ENCODE measurements at regions of chr6 and their contacts with region 1.

Region 1: GRCh38 chr6:30533460-30534294 is 22.6 kb downstream of the GNL1 start:
- DNase-seq: no peak
- H3K4me3 ChIP-seq: no peak overlapping the region
- H3K27ac ChIP-seq: no peak overlapping the region
- H3K4me1 ChIP-seq: no peaks in the 10 kb centered on the region
- H3K27me3 ChIP-seq: no peaks in the 10 kb centered on the region
- CTCF ChIP-seq: no peak
- EP300 ChIP-seq: no peak
- POLR2A ChIP-seq: no peak
- RAD21 ChIP-seq: no peak

Region 2: GRCh38 chr6:30418448-30418847 is 115.2 kb before region 1 on chr6:
- CTCF ChIA-PET with region 1: no interaction called
- POLR2A ChIA-PET with region 1: no interaction called
- DNase-seq: no peak
- H3K4me3 ChIP-seq: no peak overlapping the region
- H3K27ac ChIP-seq: no peak overlapping the region
- H3K4me1 ChIP-seq: no peaks in the 10 kb centered on the region
- H3K27me3 ChIP-seq: peaks cover 0 to 5% (median 0%) of the 10 kb centered on the region in 4 experiments; a peak in 2 of 7 replicates
- CTCF ChIP-seq: no peak
- EP300 ChIP-seq: no peak
- POLR2A ChIP-seq: no peak
- RAD21 ChIP-seq: no peak

Region 3: GRCh38 chr6:30483677-30484279 is 49.9 kb before region 1 on chr6:
- CTCF ChIA-PET with region 1: interaction called, 326 read pairs
- POLR2A ChIA-PET with region 1: no interaction called
- DNase-seq: no peak
- H3K4me3 ChIP-seq: no peak overlapping the region
- H3K27ac ChIP-seq: no peak overlapping the region
- H3K4me1 ChIP-seq: peaks cover 0 to 2% (median 0%) of the 10 kb centered on the region in 4 experiments; a peak in 3 of 7 replicates
- H3K27me3 ChIP-seq: peaks cover 7 to 23% (median 17%) of the 10 kb centered on the region in 4 experiments; a peak in 6 of 7 replicates
- CTCF ChIP-seq: peak in 2 of 3 experiments; percentile 49 to 63; a peak in 3 of 4 replicates
- EP300 ChIP-seq: no peak
- POLR2A ChIP-seq: no peak
- RAD21 ChIP-seq: peak; percentile 68 to 75

Region 4: GRCh38 chr6:30489081-30490025 is 44.3 kb before region 1 on chr6 and contains the start of gene HLA-E:
- CTCF ChIA-PET with region 1: interaction called, 326 read pairs
- POLR2A ChIA-PET with region 1: interaction called, 4 read pairs
- DNase-seq: peak; percentile 87 to 94
- H3K4me3 ChIP-seq: peak within 1 kb of the TSS; percentile 79 to 94 (median 86)
- H3K27ac ChIP-seq: peak within 1 kb of the TSS; percentile 30; the same call in 1 of the 2 replicates
- H3K4me1 ChIP-seq: peaks cover 0 to 5% (median 2%) of the 10 kb centered on the region in 4 experiments; a peak in 5 of 7 replicates
- H3K27me3 ChIP-seq: no peaks in the 10 kb centered on the region; a peak in 1 of 7 replicates
- CTCF ChIP-seq: no peak
- EP300 ChIP-seq: no peak
- POLR2A ChIP-seq: peak; percentile 98
- RAD21 ChIP-seq: 0 out of 4 replicates have a peak, but pooled peaks of 1 of the 2 experiments have one; percentile 2
- total RNA-seq, gene HLA-E: 24.4 and 28.0 TPM in 2 replicates

Region 5: GRCh38 chr6:30500421-30501355 is 33.0 kb before region 1 on chr6:
- CTCF ChIA-PET with region 1: interaction called, 15 read pairs
- POLR2A ChIA-PET with region 1: no interaction called
- DNase-seq: no peak
- H3K4me3 ChIP-seq: no peak overlapping the region
- H3K27ac ChIP-seq: no peak overlapping the region
- H3K4me1 ChIP-seq: no peaks in the 10 kb centered on the region; a peak in 1 of 7 replicates
- H3K27me3 ChIP-seq: no peaks in the 10 kb centered on the region
- CTCF ChIP-seq: no peak
- EP300 ChIP-seq: no peak
- POLR2A ChIP-seq: no peak
- RAD21 ChIP-seq: no peak

Region 6: DNA sequence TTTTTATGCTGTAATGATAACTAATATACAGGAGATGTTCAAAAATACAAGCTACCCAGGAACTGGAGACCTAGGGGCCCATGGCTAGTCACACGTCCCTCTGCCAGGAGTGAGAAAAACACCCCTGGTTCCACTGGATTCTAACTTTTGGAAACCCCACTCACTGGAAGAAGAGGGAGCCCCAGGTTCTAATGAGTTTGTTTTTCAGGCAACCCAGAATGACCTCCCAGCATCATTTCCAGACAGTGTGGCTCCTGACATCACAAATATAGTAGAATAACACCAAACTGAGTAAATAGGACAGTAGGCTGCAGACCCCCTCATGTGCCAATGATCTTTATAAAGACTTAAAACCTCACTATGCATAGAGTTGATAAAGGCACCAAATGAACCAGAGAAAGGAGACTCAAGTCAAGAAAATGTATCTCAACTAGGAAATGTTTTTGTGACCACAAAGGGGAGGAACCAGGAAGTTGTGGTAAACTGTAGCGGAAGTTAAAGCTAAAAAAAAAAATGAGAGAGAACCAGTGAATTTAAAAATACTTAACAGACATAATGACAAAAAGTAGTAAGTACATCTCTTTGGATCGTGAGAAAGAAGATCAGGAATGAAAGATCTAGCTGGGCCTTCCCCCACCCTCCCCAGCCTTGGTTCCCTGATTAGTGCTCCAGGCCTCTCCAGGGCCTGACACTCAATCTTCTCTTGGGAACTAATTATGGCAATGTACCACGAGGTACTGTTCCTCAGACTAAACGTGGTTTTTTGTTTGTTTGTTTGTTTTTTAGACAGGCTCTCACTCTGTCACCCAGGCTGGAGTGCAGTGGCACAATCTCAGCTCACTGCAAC is 24.6 kb before region 1 on chr6:
- CTCF ChIA-PET with region 1: interaction called, 12 read pairs
- POLR2A ChIA-PET with region 1: no interaction called
- DNase-seq: no peak
- H3K4me3 ChIP-seq: no peak overlapping the region
- H3K27ac ChIP-seq: no peak overlapping the region
- H3K4me1 ChIP-seq: 0 out of 7 replicates have a peak, but pooled peaks cover 0 to 2% (median 0%) of the 10 kb centered on the region in 4 experiments
- H3K27me3 ChIP-seq: no peaks in the 10 kb centered on the region
- CTCF ChIP-seq: no peak
- EP300 ChIP-seq: no peak
- POLR2A ChIP-seq: no peak
- RAD21 ChIP-seq: no peak

Region 7: GRCh38 chr6:30515932-30516753 is 17.5 kb before region 1 on chr6:
- CTCF ChIA-PET with region 1: interaction called, 12 read pairs
- POLR2A ChIA-PET with region 1: no interaction called
- DNase-seq: peak; percentile 65 to 83
- H3K4me3 ChIP-seq: peak overlapping the region; percentile 41 to 58 (median 56); a peak in 7 of 8 replicates
- H3K27ac ChIP-seq: peak overlapping the region; percentile 48
- H3K4me1 ChIP-seq: peaks cover 2 to 6% (median 4%) of the 10 kb centered on the region in 4 experiments; a peak in 2 of 7 replicates
- H3K27me3 ChIP-seq: no peaks in the 10 kb centered on the region
- CTCF ChIP-seq: no peak
- EP300 ChIP-seq: no peak
- POLR2A ChIP-seq: peak in 1 of 2 experiments; percentile 73; a peak in 2 of 3 replicates
- RAD21 ChIP-seq: no peak

Measured in H1 (cell line).